ENCODE measurements at regions of chr4 and their contacts with region 1.

Region 1: GRCh38 chr4:122434285-122434684 is 22.2 kb downstream of the IL2 start:
- DNase-seq: peak in 1 of 35 experiments; percentile 28
- ATAC-seq: peak; percentile 26 to 79 (median 52)
- H3K4me3 ChIP-seq: no peak overlapping the region
- H3K4me3 Mint-ChIP-seq: peak overlapping the region in 1 of 3 donors; percentile 63
- H3K27ac ChIP-seq: no peak overlapping the region
- H3K27ac Mint-ChIP-seq: peak overlapping the region in 1 of 2 donors; percentile 44
- H3K4me1 ChIP-seq: peaks cover 3 to 20% of the 10 kb centered on the region in 2 experiments
- H3K4me1 Mint-ChIP-seq: peaks cover 22 to 35% (median 35%) of the 10 kb centered on the region in 3 donors
- H3K27me3 ChIP-seq: no peaks in the 10 kb centered on the region
- H3K27me3 Mint-ChIP-seq: no peaks in the 10 kb centered on the region

Region 2: GRCh38 chr4:122403861-122404260 is 30.4 kb before region 1 on chr4:
- CTCF ChIA-PET with region 1: no interaction called
- POLR2A ChIA-PET with region 1: no interaction called
- DNase-seq: no peak
- ATAC-seq: no peak
- H3K4me3 ChIP-seq: no peak overlapping the region
- H3K4me3 Mint-ChIP-seq: no peak overlapping the region
- H3K27ac ChIP-seq: no peak overlapping the region
- H3K27ac Mint-ChIP-seq: no peak overlapping the region
- H3K4me1 ChIP-seq: no peaks in the 10 kb centered on the region
- H3K4me1 Mint-ChIP-seq: no peaks in the 10 kb centered on the region
- H3K27me3 ChIP-seq: no peaks in the 10 kb centered on the region
- H3K27me3 Mint-ChIP-seq: peaks cover 0 to 4% of the 10 kb centered on the region in 2 donors

Region 3: GRCh38 chr4:122423246-122423645 is 11.0 kb before region 1 on chr4:
- CTCF ChIA-PET with region 1: interaction called, 4 to 10 read pairs
- POLR2A ChIA-PET with region 1: no interaction called
- DNase-seq: no peak
- ATAC-seq: no peak
- H3K4me3 ChIP-seq: no peak overlapping the region
- H3K4me3 Mint-ChIP-seq: no peak overlapping the region
- H3K27ac ChIP-seq: no peak overlapping the region
- H3K27ac Mint-ChIP-seq: no peak overlapping the region
- H3K4me1 ChIP-seq: no peaks in the 10 kb centered on the region
- H3K4me1 Mint-ChIP-seq: no peaks in the 10 kb centered on the region
- H3K27me3 ChIP-seq: no peaks in the 10 kb centered on the region
- H3K27me3 Mint-ChIP-seq: peaks cover 0 to 3% of the 10 kb centered on the region in 2 donors

Region 4: DNA sequence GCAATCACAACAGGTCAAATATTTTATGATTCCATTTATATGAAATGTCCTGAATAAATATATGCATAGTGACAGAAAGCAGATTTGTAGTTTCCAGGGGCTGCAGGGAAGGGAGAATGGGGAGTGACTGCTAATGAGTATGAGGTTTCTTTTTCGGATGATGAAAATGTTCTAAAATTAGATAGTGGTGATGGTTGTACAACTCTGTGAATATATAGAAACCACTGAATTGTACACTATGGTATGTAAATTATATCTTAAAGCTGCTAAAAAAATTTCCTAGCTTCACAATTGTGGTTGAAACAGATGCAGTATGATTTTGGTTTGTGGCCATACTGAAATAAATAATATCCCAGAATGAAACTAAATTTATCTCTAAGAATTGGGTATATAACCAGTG is 35.2 kb after region 1 on chr4:
- CTCF ChIA-PET with region 1: no interaction called
- POLR2A ChIA-PET with region 1: no interaction called
- DNase-seq: no peak
- ATAC-seq: no peak
- H3K4me3 ChIP-seq: no peak overlapping the region
- H3K4me3 Mint-ChIP-seq: no peak overlapping the region
- H3K27ac ChIP-seq: no peak overlapping the region
- H3K27ac Mint-ChIP-seq: no peak overlapping the region
- H3K4me1 ChIP-seq: no peaks in the 10 kb centered on the region
- H3K4me1 Mint-ChIP-seq: peaks cover 0 to 11% (median 3%) of the 10 kb centered on the region in 3 donors
- H3K27me3 ChIP-seq: no peaks in the 10 kb centered on the region
- H3K27me3 Mint-ChIP-seq: peaks cover 0 to 3% of the 10 kb centered on the region in 2 donors

Region 5: GRCh38 chr4:122591196-122591595 is 156.9 kb after region 1 on chr4:
- CTCF ChIA-PET with region 1: no interaction called
- POLR2A ChIA-PET with region 1: interaction called in 1 of 2 experiments, 11 read pairs
- DNase-seq: no peak
- ATAC-seq: no peak
- H3K4me3 ChIP-seq: no peak overlapping the region
- H3K4me3 Mint-ChIP-seq: no peak overlapping the region
- H3K27ac ChIP-seq: no peak overlapping the region
- H3K27ac Mint-ChIP-seq: no peak overlapping the region
- H3K4me1 ChIP-seq: peaks cover 0 to 1% of the 10 kb centered on the region in 2 experiments
- H3K4me1 Mint-ChIP-seq: peaks cover 0 to 2% (median 0%) of the 10 kb centered on the region in 3 donors
- H3K27me3 ChIP-seq: no peaks in the 10 kb centered on the region
- H3K27me3 Mint-ChIP-seq: no peaks in the 10 kb centered on the region

Measured in T-cell (primary cell).